ENCODE measurements at regions of chr2 and their contacts with region 1.

Region 1: GRCh38 chr2:102251042-102251848 is 60.1 kb upstream of the IL1RL1 start:
- DNase-seq: peak; percentile 48 to 84 (median 62)
- ATAC-seq: peak; percentile 87
- H3K4me3 ChIP-seq: peak overlapping the region; percentile 60
- H3K4me3 Mint-ChIP-seq: peak overlapping the region; percentile 96
- H3K27ac ChIP-seq: no peak overlapping the region
- H3K27ac Mint-ChIP-seq: peak overlapping the region; percentile 12
- H3K4me1 ChIP-seq: peaks cover 19% of the 10 kb centered on the region
- H3K4me1 Mint-ChIP-seq: peaks cover 23% of the 10 kb centered on the region
- H3K27me3 ChIP-seq: no peaks in the 10 kb centered on the region
- H3K27me3 Mint-ChIP-seq: no peaks in the 10 kb centered on the region
- CTCF ChIP-seq: peak; percentile 90

Region 2: DNA sequence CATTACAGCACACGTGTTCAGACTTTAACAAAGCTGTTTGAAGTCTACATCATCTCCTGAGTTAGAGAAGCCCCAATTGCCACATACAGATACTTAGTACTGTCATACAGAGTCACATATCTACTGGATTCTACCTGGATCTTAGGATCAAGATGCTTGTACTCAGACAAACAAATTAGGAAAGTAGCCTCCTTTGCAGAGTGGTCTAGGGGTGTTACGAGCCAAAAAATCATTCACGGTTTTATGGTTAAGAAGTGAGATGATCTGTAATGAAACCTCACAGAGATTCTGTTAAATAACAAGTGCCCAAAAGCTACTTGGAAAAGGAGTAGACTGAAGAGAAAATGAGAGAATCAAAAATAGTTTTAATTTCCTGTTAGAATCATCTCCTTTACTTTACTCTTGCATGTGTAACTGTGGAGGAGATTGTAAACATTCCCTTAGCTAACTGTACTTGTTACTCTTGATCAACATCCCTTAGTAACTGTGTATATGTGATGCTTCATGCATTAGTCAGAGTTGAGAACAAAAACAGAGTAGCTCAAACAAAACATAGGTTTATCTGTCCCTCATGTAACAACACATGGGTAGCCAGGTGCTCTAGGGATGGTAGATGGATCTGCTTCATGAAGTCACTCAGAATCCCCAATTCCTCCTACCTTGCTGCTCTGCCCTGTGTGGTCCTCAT is 43.7 kb after region 1 on chr2:
- CTCF ChIA-PET with region 1: no interaction called
- POLR2A ChIA-PET with region 1: no interaction called
- intact Hi-C with region 1: loop called in 1 of 2 experiments (anchors 5 kb)
- DNase-seq: no peak
- ATAC-seq: no peak
- H3K4me3 ChIP-seq: no peak overlapping the region
- H3K4me3 Mint-ChIP-seq: no peak overlapping the region
- H3K27ac ChIP-seq: no peak overlapping the region
- H3K27ac Mint-ChIP-seq: no peak overlapping the region
- H3K4me1 ChIP-seq: peaks cover 4% of the 10 kb centered on the region
- H3K4me1 Mint-ChIP-seq: no peaks in the 10 kb centered on the region
- H3K27me3 ChIP-seq: no peaks in the 10 kb centered on the region
- H3K27me3 Mint-ChIP-seq: no peaks in the 10 kb centered on the region
- CTCF ChIP-seq: no peak

Region 3: GRCh38 chr2:102355526-102356380 is 104.5 kb after region 1 on chr2 and contains the start of gene IL18R1:
- CTCF ChIA-PET with region 1: interaction called, 4 read pairs
- POLR2A ChIA-PET with region 1: no interaction called
- intact Hi-C with region 1: loop called (anchors 5 kb)
- DNase-seq: peak; percentile 29 to 88 (median 55)
- ATAC-seq: peak; percentile 76
- H3K4me3 ChIP-seq: peak within 1 kb of the TSS; percentile 97
- H3K4me3 Mint-ChIP-seq: peak within 1 kb of the TSS; percentile 91
- H3K27ac ChIP-seq: peak within 1 kb of the TSS; percentile 41 to 83
- H3K27ac Mint-ChIP-seq: peak within 1 kb of the TSS; percentile 87
- H3K4me1 ChIP-seq: peaks cover 27% of the 10 kb centered on the region
- H3K4me1 Mint-ChIP-seq: peaks cover 44% of the 10 kb centered on the region
- H3K27me3 ChIP-seq: no peaks in the 10 kb centered on the region
- H3K27me3 Mint-ChIP-seq: no peaks in the 10 kb centered on the region
- CTCF ChIP-seq: peak; percentile 92
- total RNA-seq, gene IL18R1: 7.6 to 9.1 TPM

Measured in CD4-positive, alpha-beta T cell (primary cell).